Activated T-helper 2 cell treated with anti-CD3 and anti-CD28 coated beads, Interferon-gamma antibody, Interleukin-2, Interleukin-4, amounts not matched to agents 10 μg/mL and 5 μg/mL and 100 μg/mL, durations not matched to agents 14 hours and 24 hours and 36 hours (primary cell): ENCODE measurements at regions of chr15 and their contacts with region 1.

Region 1: GRCh38 chr15:84761607-84762131 is 13.3 kb downstream of the ZNF592 start:
- DNase-seq: no peak
- H3K4me3 Mint-ChIP-seq: no peak overlapping the region
- H3K27ac Mint-ChIP-seq: no peak overlapping the region
- H3K4me1 Mint-ChIP-seq: peaks cover 30% of the 10 kb centered on the region
- H3K27me3 Mint-ChIP-seq: no peaks in the 10 kb centered on the region

Region 2: DNA sequence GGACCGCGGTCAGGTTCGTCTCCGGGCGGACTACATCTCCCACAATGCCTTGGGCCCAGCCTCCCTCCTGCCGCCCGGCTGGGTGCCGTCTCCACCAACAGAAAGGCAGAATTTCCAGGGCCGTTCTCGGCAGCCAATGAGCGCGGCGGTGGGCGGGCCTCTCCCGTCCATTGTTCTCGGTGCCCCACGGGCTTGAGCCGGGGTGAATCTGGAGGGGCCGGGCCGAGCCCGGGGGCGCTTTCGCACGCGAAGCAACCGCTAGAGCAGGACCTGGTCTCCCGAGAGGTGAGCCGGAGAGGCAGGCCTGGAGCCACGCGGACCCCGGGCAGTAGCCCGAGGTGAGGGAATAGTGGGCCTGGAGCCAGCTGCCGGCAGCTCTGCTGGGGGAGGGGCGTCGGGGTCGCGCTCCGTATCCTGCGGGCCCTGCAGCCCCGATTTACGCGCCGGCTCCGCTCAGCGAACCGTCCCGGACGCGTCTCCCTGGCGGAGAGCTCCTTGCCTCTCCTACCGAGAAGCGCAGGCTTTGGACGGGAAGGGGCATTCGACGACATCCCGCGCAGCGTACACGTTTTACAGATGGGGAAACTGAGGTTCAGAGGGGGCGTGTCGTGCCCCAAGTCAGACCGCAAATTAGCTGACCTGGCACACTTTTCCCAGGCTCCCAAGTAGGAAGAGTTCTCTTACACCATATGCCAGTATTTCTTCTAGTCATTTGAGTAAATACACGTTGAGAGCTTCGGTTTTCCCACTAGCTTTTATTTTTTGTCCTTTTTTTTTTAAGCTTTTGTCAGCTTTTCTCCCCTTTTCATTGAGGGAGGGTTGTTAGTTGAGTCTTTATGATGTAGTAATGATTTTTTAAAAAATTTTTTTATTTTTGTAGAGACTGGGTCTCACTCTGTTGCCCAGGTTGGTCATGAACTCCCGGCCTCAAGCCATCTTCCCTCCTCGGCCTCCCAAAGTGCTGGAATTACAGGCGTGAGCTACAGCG is 160.5 kb before region 1 on chr15 and contains the start of gene ZSCAN2:
- intact Hi-C with region 1: loop called (anchors 5 kb)
- DNase-seq: peak; percentile 92
- H3K4me3 Mint-ChIP-seq: peak within 1 kb of the TSS; percentile 90
- H3K27ac Mint-ChIP-seq: peak within 1 kb of the TSS; percentile 73
- H3K4me1 Mint-ChIP-seq: peaks cover 48% of the 10 kb centered on the region
- H3K27me3 Mint-ChIP-seq: no peaks in the 10 kb centered on the region
- total RNA-seq, gene ZSCAN2: 10.1 and 10.6 TPM in 2 replicates

Region 3: GRCh38 chr15:84734794-84735479 is 26.7 kb before region 1 on chr15:
- intact Hi-C with region 1: loop called (anchors 1 kb)
- DNase-seq: peak; percentile 72
- H3K4me3 Mint-ChIP-seq: peak overlapping the region; percentile 59
- H3K27ac Mint-ChIP-seq: peak overlapping the region; percentile 95
- H3K4me1 Mint-ChIP-seq: peaks cover 40% of the 10 kb centered on the region
- H3K27me3 Mint-ChIP-seq: no peaks in the 10 kb centered on the region

Region 4: DNA sequence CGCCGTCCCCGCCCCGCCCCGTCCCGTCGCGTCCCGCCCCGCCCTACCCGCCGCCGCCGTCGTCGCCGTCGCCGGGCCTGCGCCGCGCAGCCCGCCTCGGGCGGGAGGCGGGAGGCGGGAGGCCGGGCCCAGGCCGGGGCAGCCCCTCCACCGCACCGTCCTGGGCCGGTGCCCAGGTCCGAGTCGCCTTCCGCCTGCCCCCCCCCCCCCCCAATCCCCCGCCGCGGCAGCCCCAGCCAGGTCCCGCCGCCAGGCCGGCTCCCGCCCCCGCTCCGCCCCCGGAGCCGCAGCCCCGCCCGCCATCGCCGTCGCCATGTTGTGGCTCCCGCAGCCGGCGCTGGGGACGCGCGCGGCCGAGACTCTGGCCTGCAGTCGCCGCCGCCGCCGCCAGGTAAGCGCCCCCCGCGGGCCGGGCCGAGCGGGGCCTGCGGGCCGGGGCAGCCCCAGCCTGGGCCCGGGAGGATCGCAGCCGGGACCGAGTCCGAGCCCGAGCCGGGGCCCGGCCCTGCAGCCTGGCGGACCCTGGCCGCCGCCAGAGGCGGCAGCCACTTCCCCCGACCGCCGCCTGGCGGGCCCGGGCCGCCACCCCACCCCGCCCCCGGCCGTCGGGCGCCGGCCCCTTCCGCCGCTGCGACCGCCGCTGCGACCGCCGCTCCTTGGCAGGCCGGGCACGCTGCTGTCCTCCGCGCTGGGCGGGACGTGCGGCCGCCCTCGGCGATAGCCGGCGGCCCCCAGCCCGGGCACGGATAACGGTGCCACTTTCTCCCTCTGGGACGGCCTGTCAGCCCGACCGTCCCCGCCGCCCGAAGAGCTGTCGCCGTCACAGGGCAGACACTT is 13.2 kb before region 1 on chr15 and contains the start of gene ZNF592:
- intact Hi-C with region 1: loop called (anchors 1 kb)
- DNase-seq: peak; percentile 76
- H3K4me3 Mint-ChIP-seq: peak within 1 kb of the TSS; percentile 94
- H3K27ac Mint-ChIP-seq: peak within 1 kb of the TSS; percentile 97
- H3K4me1 Mint-ChIP-seq: peaks cover 47% of the 10 kb centered on the region
- H3K27me3 Mint-ChIP-seq: no peaks in the 10 kb centered on the region
- total RNA-seq, gene ZNF592: 29.3 and 31.3 TPM in 2 replicates

Region 5: GRCh38 chr15:85010386-85011159 is 248.9 kb after region 1 on chr15:
- intact Hi-C with region 1: no loop called
- DNase-seq: no peak
- H3K4me3 Mint-ChIP-seq: no peak overlapping the region
- H3K27ac Mint-ChIP-seq: no peak overlapping the region
- H3K4me1 Mint-ChIP-seq: peaks cover 14% of the 10 kb centered on the region
- H3K27me3 Mint-ChIP-seq: no peaks in the 10 kb centered on the region